Activated CD4-positive, alpha-beta memory T cell treated with anti-CD3 and anti-CD28 coated beads, Interleukin-2, amount 10 ng/mL, durations not matched to agents 7 days and 5 days (primary cell): ENCODE measurements at regions of chr2 and their contacts with region 1.

Region 1: DNA sequence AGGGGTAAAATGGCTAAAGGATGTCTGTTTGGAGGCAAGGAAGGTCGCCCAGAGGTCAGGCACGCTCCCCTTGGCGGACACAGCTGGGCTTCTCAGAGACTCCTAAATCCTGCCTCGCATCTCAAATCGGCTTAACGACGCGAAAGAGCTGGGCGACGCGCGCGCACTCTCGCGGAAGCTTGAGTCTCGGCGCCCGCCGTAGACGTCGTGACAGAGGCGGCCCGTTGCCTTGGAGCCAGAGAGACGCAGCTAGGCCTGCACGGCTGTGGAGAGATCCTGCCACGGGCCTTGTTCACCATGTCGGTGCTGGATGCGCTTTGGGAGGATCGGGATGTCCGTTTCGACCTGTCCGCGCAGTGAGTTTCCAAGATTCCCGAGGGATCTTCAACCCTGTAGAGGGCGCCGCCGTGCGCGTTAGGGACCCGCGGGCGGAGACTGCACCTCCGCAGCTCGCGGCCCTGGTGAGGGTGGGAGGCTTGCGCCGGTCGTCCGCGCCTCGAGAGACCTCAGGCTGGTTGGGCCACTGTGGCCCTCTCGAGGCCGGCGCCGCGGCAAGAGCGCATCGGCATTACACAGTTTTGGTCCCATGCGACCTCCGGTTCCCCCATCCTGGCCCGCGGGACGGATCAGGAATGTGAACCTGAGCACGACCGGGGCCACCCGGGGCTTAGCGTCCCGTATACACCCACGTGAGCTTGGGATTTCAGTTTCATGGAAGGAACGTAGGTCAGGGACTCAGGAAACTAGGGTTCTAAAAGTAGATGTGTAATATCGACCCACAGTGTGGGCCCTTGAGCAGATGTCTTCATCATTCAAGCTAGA is at the start of gene BBS5:
- DNase-seq: peak; percentile 82
- H3K4me3 Mint-ChIP-seq: peak within 1 kb of the TSS; percentile 84
- H3K27ac Mint-ChIP-seq: no peak within 1 kb of the TSS
- H3K4me1 Mint-ChIP-seq: peaks cover 20% of the 10 kb centered on the region
- H3K27me3 Mint-ChIP-seq: no peaks in the 10 kb centered on the region
- total RNA-seq, gene BBS5: 0.90 to 1.1 TPM

Region 2: DNA sequence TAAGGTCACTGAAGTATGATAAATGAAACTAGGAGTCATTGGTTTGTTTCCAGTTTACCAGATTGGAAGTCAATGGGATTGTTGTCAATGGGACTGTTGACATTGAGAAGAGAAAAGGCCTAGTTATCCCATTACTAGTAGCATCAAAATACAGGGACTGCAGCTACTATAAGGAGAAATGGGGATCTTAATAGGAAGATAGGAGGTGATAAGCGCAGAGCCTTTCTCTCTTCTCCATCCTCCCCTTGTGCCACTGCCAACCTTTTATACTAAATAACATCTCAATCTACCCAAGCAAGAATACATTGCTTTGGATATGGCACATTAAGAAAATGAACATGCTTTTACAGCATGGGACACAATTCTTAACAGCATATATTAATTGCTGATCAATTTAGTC is 10.6 kb before region 1 on chr2:
- CTCF ChIA-PET with region 1: interaction called, 29 read pairs
- POLR2A ChIA-PET with region 1: interaction called, 3 read pairs
- DNase-seq: no peak
- H3K4me3 Mint-ChIP-seq: no peak overlapping the region
- H3K27ac Mint-ChIP-seq: no peak overlapping the region
- H3K4me1 Mint-ChIP-seq: no peaks in the 10 kb centered on the region
- H3K27me3 Mint-ChIP-seq: no peaks in the 10 kb centered on the region